Activated naive CD4-positive, alpha-beta T cell treated with anti-CD3 and anti-CD28 coated beads for 36 hours (primary cell): ENCODE measurements at regions of chr14 and their contacts with region 1.

Region 1: DNA sequence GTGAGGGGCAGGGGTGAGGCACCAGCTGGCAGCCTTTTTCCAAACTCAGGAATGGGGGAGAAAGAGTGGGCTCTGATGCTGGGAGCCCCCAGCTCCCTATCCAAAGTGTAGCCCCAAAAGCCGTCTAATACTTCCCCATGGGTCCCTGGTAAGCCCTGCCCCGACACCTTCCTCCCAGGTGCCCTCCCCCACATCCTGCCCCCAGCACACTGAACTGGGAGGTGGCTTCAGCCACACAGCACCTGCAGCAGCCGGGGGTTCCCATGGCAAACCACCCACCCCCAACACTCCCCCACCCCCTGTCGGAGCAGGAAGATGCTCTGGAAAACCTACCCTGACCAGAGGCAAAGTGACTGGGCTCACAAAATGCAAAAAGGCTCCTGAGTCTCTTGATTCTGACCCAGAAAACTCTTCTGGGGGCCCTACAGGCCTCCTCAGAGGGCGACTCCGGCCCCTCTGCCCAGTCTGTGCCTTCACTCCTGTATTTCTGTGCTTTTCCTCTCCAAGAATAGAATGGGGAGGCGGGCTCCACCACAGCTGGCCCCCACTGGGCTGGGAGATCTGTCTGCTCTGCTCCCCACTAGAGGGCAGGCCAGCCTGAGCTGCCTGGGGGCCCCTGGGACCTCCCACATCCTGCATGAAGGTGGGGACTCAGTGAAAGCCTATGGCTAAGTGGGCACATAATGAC is 81.6 kb downstream of the ITPK1 start:
- DNase-seq: peak; percentile 44
- H3K4me3 Mint-ChIP-seq: no peak overlapping the region
- H3K27ac Mint-ChIP-seq: no peak overlapping the region
- H3K4me1 Mint-ChIP-seq: peaks cover 19% of the 10 kb centered on the region
- H3K27me3 Mint-ChIP-seq: no peaks in the 10 kb centered on the region

Region 2: GRCh38 chr14:93064411-93065323 is 30.5 kb after region 1 on chr14:
- CTCF ChIA-PET with region 1: no interaction called
- intact Hi-C with region 1: loop called (anchors 1 kb)
- DNase-seq: no peak
- H3K4me3 Mint-ChIP-seq: no peak overlapping the region
- H3K27ac Mint-ChIP-seq: no peak overlapping the region
- H3K4me1 Mint-ChIP-seq: peaks cover 39% of the 10 kb centered on the region
- H3K27me3 Mint-ChIP-seq: no peaks in the 10 kb centered on the region